ENCODE measurements at regions of chr1 and their contacts with region 1.

Region 1: DNA sequence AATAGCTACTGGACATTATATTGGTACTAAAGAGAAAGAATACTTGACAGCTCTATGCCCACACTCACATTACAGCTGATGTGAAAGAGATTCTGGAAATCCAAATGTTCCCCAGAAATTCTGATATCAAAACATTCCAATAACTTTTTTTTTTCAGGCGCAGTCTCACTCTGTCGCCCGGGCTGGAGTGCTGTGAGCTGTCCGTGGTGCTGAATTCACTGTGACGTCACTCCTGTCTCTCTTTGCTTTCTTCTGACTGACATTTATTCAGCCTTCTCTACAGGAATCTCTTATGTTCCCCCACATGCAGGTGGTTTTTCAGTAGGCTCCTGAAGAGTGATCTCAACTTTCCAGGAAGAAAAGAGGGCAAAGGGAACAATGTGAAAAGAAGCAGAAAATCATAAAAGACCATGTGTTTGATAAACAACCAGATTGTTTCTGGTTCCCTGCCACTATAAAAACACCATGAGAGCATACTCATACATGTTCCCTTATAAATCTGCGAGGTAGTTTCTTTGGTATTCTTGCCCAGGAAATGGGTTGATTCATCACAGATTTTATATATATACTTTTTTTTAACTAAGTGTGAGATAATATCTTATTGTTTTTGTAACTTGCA is 6.2 kb downstream of the S100A7A start:
- DNase-seq: peak; percentile 84
- H3K4me3 Mint-ChIP-seq: no peak overlapping the region
- H3K27ac Mint-ChIP-seq: no peak overlapping the region
- H3K4me1 Mint-ChIP-seq: no peaks in the 10 kb centered on the region
- H3K27me3 Mint-ChIP-seq: peaks cover 86% of the 10 kb centered on the region
- CTCF ChIP-seq: no peak

Region 2: GRCh38 chr1:152899027-152899426 is 523.5 kb before region 1 on chr1:
- CTCF ChIA-PET with region 1: no interaction called
- POLR2A ChIA-PET with region 1: no interaction called
- intact Hi-C with region 1: no loop called
- DNase-seq: no peak
- H3K4me3 Mint-ChIP-seq: no peak overlapping the region
- H3K27ac Mint-ChIP-seq: no peak overlapping the region
- H3K4me1 Mint-ChIP-seq: no peaks in the 10 kb centered on the region
- H3K27me3 Mint-ChIP-seq: no peaks in the 10 kb centered on the region
- CTCF ChIP-seq: no peak

Region 3: GRCh38 chr1:153344531-153344981 is 78.0 kb before region 1 on chr1:
- CTCF ChIA-PET with region 1: no interaction called
- POLR2A ChIA-PET with region 1: no interaction called
- intact Hi-C with region 1: no loop called
- DNase-seq: no peak
- H3K4me3 Mint-ChIP-seq: no peak overlapping the region
- H3K27ac Mint-ChIP-seq: no peak overlapping the region
- H3K4me1 Mint-ChIP-seq: peaks cover 10% of the 10 kb centered on the region
- H3K27me3 Mint-ChIP-seq: peaks cover 83% of the 10 kb centered on the region
- CTCF ChIP-seq: no peak

Region 4: GRCh38 chr1:153404768-153405167 is 17.8 kb before region 1 on chr1:
- CTCF ChIA-PET with region 1: no interaction called
- POLR2A ChIA-PET with region 1: no interaction called
- intact Hi-C with region 1: loop called (anchors 2 kb)
- DNase-seq: peak; percentile 73
- H3K4me3 Mint-ChIP-seq: no peak overlapping the region
- H3K27ac Mint-ChIP-seq: no peak overlapping the region
- H3K4me1 Mint-ChIP-seq: no peaks in the 10 kb centered on the region
- H3K27me3 Mint-ChIP-seq: peaks cover 67% of the 10 kb centered on the region
- CTCF ChIP-seq: peak; percentile 86

Region 5: GRCh38 chr1:153447498-153448170 is 25.1 kb after region 1 on chr1:
- CTCF ChIA-PET with region 1: no interaction called
- POLR2A ChIA-PET with region 1: interaction called, 3 read pairs
- intact Hi-C with region 1: loop called (anchors 2 kb)
- DNase-seq: peak; percentile 25
- H3K4me3 Mint-ChIP-seq: no peak overlapping the region
- H3K27ac Mint-ChIP-seq: no peak overlapping the region
- H3K4me1 Mint-ChIP-seq: no peaks in the 10 kb centered on the region
- H3K27me3 Mint-ChIP-seq: peaks cover 93% of the 10 kb centered on the region
- CTCF ChIP-seq: no peak

Measured in MCF 10A (cell line).